ENCODE measurements at regions of chr9 and their contacts with region 1.

Region 1: GRCh38 chr9:96566498-96567207 is 53.0 kb downstream of the CDC14B start:
- DNase-seq: peak; percentile 92
- ATAC-seq: peak; percentile 98
- H3K4me3 ChIP-seq: peak overlapping the region; percentile 85 to 97 (median 87)
- H3K27ac ChIP-seq: peak overlapping the region; percentile 99
- H3K4me1 ChIP-seq: peaks cover 78% of the 10 kb centered on the region
- H3K27me3 ChIP-seq: no peaks in the 10 kb centered on the region
- CTCF ChIP-seq: peak; percentile 83
- EP300 ChIP-seq: peak in 1 of 2 experiments; percentile 29; a peak in 3 of 4 replicates
- POLR2A ChIP-seq: peak; percentile 62 to 64
- RAD21 ChIP-seq: peak; percentile 51

Region 2: GRCh38 chr9:96436063-96436455 is 130.6 kb before region 1 on chr9:
- CTCF ChIA-PET with region 1: no interaction called
- POLR2A ChIA-PET with region 1: no interaction called
- in situ Hi-C with region 1: no loop called
- intact Hi-C with region 1: no loop called
- DNase-seq: no peak
- ATAC-seq: no peak
- H3K4me3 ChIP-seq: peak overlapping the region in 1 of 3 experiments; percentile 35; a peak in 2 of 6 replicates
- H3K27ac ChIP-seq: peak overlapping the region; percentile 84
- H3K4me1 ChIP-seq: peaks cover 64% of the 10 kb centered on the region
- H3K27me3 ChIP-seq: no peaks in the 10 kb centered on the region
- CTCF ChIP-seq: no peak
- EP300 ChIP-seq: 0 out of 4 replicates have a peak, but pooled peaks of 1 of the 2 experiments have one; percentile 5
- POLR2A ChIP-seq: no peak
- RAD21 ChIP-seq: no peak

Region 3: GRCh38 chr9:96491079-96491879 is 75.4 kb before region 1 on chr9:
- CTCF ChIA-PET with region 1: no interaction called
- POLR2A ChIA-PET with region 1: interaction called, 27 read pairs
- in situ Hi-C with region 1: no loop called
- intact Hi-C with region 1: loop called (anchors 1 kb)
- DNase-seq: peak; percentile 99
- ATAC-seq: peak; percentile 90
- H3K4me3 ChIP-seq: peak overlapping the region; percentile 20 to 60 (median 36); a peak in 5 of 6 replicates
- H3K27ac ChIP-seq: peak overlapping the region; percentile 98
- H3K4me1 ChIP-seq: peaks cover 83% of the 10 kb centered on the region
- H3K27me3 ChIP-seq: no peaks in the 10 kb centered on the region
- CTCF ChIP-seq: no peak
- EP300 ChIP-seq: peak in 1 of 2 experiments; percentile 89
- POLR2A ChIP-seq: peak; percentile 72 to 95
- RAD21 ChIP-seq: peak; percentile 46; the same call in 1 of the 2 replicates

Region 4: DNA sequence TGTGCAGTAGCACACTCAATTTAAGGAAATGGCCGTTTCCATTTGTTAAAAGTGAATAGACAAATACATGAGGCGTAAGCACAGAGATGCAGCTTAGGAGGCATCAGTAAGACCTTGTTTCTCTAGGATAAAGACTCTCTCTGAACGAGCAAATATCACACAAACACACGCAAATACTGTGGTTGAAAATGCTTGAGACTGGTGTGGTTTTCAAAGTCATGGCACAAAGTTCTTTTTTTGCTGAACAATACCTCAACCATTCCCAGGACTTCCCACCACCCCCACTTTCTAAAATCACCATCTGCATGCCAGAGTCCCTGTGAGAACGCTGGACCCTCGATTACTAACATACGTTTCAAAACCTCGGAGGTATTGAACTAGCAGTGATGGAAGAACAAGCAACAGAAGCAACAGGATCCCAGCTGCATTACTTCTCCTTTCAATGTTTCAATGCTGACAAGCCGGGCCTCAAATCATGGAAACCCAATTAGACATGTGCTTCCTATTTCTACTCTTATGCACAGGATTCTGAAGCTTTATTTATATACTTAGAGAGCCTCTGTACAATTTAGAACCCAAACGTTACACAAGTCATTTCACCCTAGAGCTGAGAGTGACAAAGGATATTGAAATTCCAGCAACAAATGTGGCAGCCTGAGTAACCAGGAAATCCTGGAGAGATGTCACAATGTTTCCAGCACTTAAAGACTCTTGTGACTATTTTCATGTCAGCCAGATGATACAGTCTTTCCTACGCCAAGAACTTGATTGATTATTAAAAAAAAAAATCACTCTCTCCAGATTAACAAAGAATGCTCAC is 10.9 kb before region 1 on chr9:
- CTCF ChIA-PET with region 1: no interaction called
- POLR2A ChIA-PET with region 1: interaction called, 19 read pairs
- in situ Hi-C with region 1: no loop called
- intact Hi-C with region 1: no loop called
- DNase-seq: no peak
- ATAC-seq: no peak
- H3K4me3 ChIP-seq: no peak overlapping the region
- H3K27ac ChIP-seq: no peak overlapping the region
- H3K4me1 ChIP-seq: peaks cover 58% of the 10 kb centered on the region
- H3K27me3 ChIP-seq: no peaks in the 10 kb centered on the region
- CTCF ChIP-seq: no peak
- EP300 ChIP-seq: no peak
- POLR2A ChIP-seq: no peak
- RAD21 ChIP-seq: no peak

Region 5: GRCh38 chr9:96619491-96620154 is 53.0 kb after region 1 on chr9 and contains the start of gene CDC14B:
- CTCF ChIA-PET with region 1: no interaction called
- POLR2A ChIA-PET with region 1: interaction called, 21 read pairs
- in situ Hi-C with region 1: no loop called
- intact Hi-C with region 1: loop called (anchors 2 kb)
- DNase-seq: peak; percentile 92
- ATAC-seq: peak; percentile 74
- H3K4me3 ChIP-seq: peak within 1 kb of the TSS; percentile 85 to 89 (median 87)
- H3K27ac ChIP-seq: peak within 1 kb of the TSS; percentile 65
- H3K4me1 ChIP-seq: peaks cover 37% of the 10 kb centered on the region
- H3K27me3 ChIP-seq: no peaks in the 10 kb centered on the region; a peak in 1 of 5 replicates
- CTCF ChIP-seq: peak; percentile 17
- EP300 ChIP-seq: no peak
- POLR2A ChIP-seq: peak in 1 of 2 experiments; percentile 55; a peak in 1 of 4 replicates
- RAD21 ChIP-seq: peak; percentile 25; the same call in 1 of the 2 replicates
- total RNA-seq, gene CDC14B: 33.3 and 37.7 TPM in 2 replicates

Region 6: GRCh38 chr9:96654443-96655197 is 88.0 kb after region 1 on chr9:
- CTCF ChIA-PET with region 1: no interaction called
- POLR2A ChIA-PET with region 1: interaction called, 6 read pairs
- in situ Hi-C with region 1: no loop called
- intact Hi-C with region 1: loop called (anchors 10 kb)
- DNase-seq: peak; percentile 41
- ATAC-seq: peak; percentile 73
- H3K4me3 ChIP-seq: peak overlapping the region; percentile 81 to 86 (median 81)
- H3K27ac ChIP-seq: peak overlapping the region; percentile 86
- H3K4me1 ChIP-seq: peaks cover 32% of the 10 kb centered on the region
- H3K27me3 ChIP-seq: no peaks in the 10 kb centered on the region; a peak in 1 of 5 replicates
- CTCF ChIP-seq: peak; percentile 40
- EP300 ChIP-seq: no peak
- POLR2A ChIP-seq: peak in 1 of 2 experiments; percentile 28; a peak in 1 of 4 replicates
- RAD21 ChIP-seq: no peak

Region 7: GRCh38 chr9:96674914-96675538 is 108.4 kb after region 1 on chr9:
- CTCF ChIA-PET with region 1: no interaction called
- POLR2A ChIA-PET with region 1: no interaction called
- in situ Hi-C with region 1: no loop called
- intact Hi-C with region 1: no loop called
- DNase-seq: no peak
- ATAC-seq: no peak
- H3K4me3 ChIP-seq: no peak overlapping the region
- H3K27ac ChIP-seq: no peak overlapping the region
- H3K4me1 ChIP-seq: no peaks in the 10 kb centered on the region
- H3K27me3 ChIP-seq: no peaks in the 10 kb centered on the region
- CTCF ChIP-seq: no peak
- EP300 ChIP-seq: no peak
- POLR2A ChIP-seq: no peak
- RAD21 ChIP-seq: no peak